Activated naive CD4-positive, alpha-beta T cell treated with anti-CD3 and anti-CD28 coated beads for 36 hours (primary cell): ENCODE measurements at regions of chr1 and their contacts with region 1.

Region 1: DNA sequence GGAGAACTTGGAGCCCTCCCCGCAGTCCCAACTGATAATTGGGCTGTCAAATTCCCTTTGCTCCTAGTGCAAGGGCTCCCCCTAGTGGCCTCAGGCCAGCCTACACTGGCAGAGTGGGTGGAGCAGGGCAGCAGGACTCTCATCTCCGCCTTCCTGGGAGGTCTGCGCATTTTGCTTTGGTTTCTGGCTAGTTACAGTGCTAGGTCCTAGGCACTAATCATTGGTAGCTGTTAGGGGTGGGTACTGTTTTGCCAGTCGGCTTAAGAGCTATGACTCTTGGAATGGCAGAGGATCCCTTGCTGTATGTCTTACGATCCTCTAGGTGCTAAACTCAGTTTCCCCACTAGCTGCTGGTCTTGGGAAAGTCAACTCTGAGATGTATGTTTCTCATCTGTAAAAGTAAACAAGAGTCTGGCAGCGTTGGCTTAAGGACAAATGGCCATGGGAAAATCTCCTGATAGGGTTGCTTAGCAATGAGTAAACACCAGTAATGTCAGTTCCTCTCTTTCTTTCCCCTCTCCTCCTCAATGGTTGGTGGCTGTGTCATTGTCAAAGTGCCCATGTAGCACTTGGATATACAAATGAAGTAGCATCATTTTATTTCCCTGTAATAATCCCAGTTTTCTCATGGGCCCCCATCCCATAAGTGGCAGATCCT is 2.1 kb upstream of the FYB2 start:
- DNase-seq: peak; percentile 82
- H3K4me3 Mint-ChIP-seq: no peak overlapping the region
- H3K27ac Mint-ChIP-seq: no peak overlapping the region
- H3K4me1 Mint-ChIP-seq: no peaks in the 10 kb centered on the region
- H3K27me3 Mint-ChIP-seq: peaks cover 34% of the 10 kb centered on the region

Region 2: GRCh38 chr1:55140546-55140983 is 1680.7 kb before region 1 on chr1:
- CTCF ChIA-PET with region 1: no interaction called
- intact Hi-C with region 1: loop called (anchors 5 kb)
- DNase-seq: peak; percentile 89
- H3K4me3 Mint-ChIP-seq: no peak overlapping the region
- H3K27ac Mint-ChIP-seq: peak overlapping the region; percentile 81
- H3K4me1 Mint-ChIP-seq: peaks cover 15% of the 10 kb centered on the region
- H3K27me3 Mint-ChIP-seq: no peaks in the 10 kb centered on the region

Region 3: GRCh38 chr1:55375617-55376258 is 1445.5 kb before region 1 on chr1:
- CTCF ChIA-PET with region 1: no interaction called
- intact Hi-C with region 1: loop called (anchors 5 kb)
- DNase-seq: peak; percentile 56
- H3K4me3 Mint-ChIP-seq: no peak overlapping the region
- H3K27ac Mint-ChIP-seq: no peak overlapping the region
- H3K4me1 Mint-ChIP-seq: peaks cover 3% of the 10 kb centered on the region
- H3K27me3 Mint-ChIP-seq: no peaks in the 10 kb centered on the region

Region 4: GRCh38 chr1:56424744-56425508 is 396.3 kb before region 1 on chr1:
- CTCF ChIA-PET with region 1: no interaction called
- intact Hi-C with region 1: no loop called
- DNase-seq: no peak
- H3K4me3 Mint-ChIP-seq: no peak overlapping the region
- H3K27ac Mint-ChIP-seq: no peak overlapping the region
- H3K4me1 Mint-ChIP-seq: no peaks in the 10 kb centered on the region
- H3K27me3 Mint-ChIP-seq: peaks cover 7% of the 10 kb centered on the region

Region 5: GRCh38 chr1:56709269-56709880 is 111.9 kb before region 1 on chr1:
- CTCF ChIA-PET with region 1: interaction called, 5 read pairs
- intact Hi-C with region 1: loop called (anchors 5 kb)
- DNase-seq: no peak
- H3K4me3 Mint-ChIP-seq: no peak overlapping the region
- H3K27ac Mint-ChIP-seq: no peak overlapping the region
- H3K4me1 Mint-ChIP-seq: no peaks in the 10 kb centered on the region
- H3K27me3 Mint-ChIP-seq: peaks cover 19% of the 10 kb centered on the region

Region 6: GRCh38 chr1:56831871-56832693 is 10.8 kb after region 1 on chr1:
- CTCF ChIA-PET with region 1: interaction called, 16 read pairs
- intact Hi-C with region 1: no loop called
- DNase-seq: peak; percentile 78
- H3K4me3 Mint-ChIP-seq: no peak overlapping the region
- H3K27ac Mint-ChIP-seq: no peak overlapping the region
- H3K4me1 Mint-ChIP-seq: peaks cover 6% of the 10 kb centered on the region
- H3K27me3 Mint-ChIP-seq: peaks cover 22% of the 10 kb centered on the region